Activated CD8-positive, alpha-beta T cell treated with anti-CD3 and anti-CD28 coated beads for 36 hours (primary cell): ENCODE measurements at regions of chr4 and their contacts with region 1.

Region 1: DNA sequence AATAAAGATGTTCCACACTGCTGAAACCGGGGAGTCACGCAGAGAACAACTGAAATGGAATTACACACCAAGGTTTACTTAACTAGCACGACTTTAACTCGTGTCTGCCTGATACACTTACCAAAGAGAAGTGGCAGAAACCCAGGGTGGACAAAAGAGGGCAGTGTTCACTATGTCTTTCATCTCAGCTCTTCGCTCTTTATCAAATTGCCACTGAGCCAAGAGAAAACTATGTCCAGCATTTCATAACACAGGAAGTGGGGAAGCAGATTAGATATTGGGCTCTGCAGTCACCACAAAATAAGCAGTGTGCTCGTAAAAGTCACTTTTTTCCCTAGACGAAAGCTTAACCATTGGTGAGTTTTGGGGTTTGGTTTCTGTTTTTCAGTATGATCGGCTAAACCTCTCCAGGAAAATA is 155.7 kb downstream of the CHIC2 start:
- DNase-seq: peak; percentile 28
- ATAC-seq: peak; percentile 66
- H3K4me3 Mint-ChIP-seq: no peak overlapping the region
- H3K27ac Mint-ChIP-seq: no peak overlapping the region
- H3K4me1 Mint-ChIP-seq: peaks cover 11% of the 10 kb centered on the region
- H3K27me3 Mint-ChIP-seq: peaks cover 44% of the 10 kb centered on the region
- CTCF ChIP-seq: peak; percentile 53

Region 2: DNA sequence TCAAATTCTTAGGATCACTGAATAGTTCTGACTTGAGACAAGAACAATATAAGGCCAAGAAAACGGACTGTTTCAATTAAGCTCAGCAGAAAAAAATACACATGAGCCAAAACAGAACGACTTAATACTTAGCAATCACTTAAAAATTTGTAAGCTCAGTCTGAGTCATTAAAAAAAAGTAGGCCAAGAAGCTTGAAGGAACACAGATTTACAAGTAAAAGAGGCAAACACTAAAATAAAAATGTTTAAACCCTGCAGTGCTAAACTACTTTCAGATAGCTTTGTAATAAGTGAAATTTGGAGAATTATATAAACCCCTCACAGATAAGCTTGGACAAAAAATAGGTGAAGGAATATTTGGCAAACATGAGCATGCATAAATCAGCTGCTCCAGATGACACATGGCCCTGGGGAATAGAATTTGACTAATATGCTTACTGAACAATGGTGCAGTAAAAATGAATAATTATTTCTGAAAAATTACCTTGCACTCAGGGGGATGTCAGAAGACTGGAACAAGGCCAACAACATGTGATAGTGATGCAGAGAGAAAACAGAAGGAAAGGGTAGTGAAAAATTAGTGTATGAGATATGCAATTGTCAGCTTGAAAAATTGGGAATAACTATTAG is 367.0 kb before region 1 on chr4:
- CTCF ChIA-PET with region 1: no interaction called
- POLR2A ChIA-PET with region 1: no interaction called
- intact Hi-C with region 1: no loop called
- DNase-seq: no peak
- ATAC-seq: no peak
- H3K4me3 Mint-ChIP-seq: no peak overlapping the region
- H3K27ac Mint-ChIP-seq: no peak overlapping the region
- H3K4me1 Mint-ChIP-seq: no peaks in the 10 kb centered on the region
- H3K27me3 Mint-ChIP-seq: peaks cover 3% of the 10 kb centered on the region
- CTCF ChIP-seq: no peak

Region 3: DNA sequence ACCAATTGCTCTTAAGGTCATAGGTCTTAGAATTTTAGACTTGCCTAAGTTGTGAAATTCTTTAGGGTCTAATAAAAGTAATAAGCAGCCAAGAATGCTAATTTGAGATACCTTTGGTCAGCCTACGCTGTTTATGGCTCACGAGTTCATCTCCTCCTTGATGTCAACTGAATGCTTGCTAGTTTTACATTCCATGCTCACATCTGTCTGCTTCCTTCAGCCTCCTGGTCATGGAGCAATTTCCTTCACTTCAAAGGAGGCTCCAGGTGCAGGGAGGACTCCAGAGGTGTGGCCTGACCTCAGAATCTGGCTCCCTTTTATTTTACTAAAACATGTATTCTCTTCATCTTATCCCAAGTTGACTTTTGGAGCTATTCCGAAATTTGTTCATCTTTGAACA is 294.1 kb before region 1 on chr4:
- CTCF ChIA-PET with region 1: no interaction called
- POLR2A ChIA-PET with region 1: no interaction called
- intact Hi-C with region 1: no loop called
- DNase-seq: no peak
- ATAC-seq: no peak
- H3K4me3 Mint-ChIP-seq: no peak overlapping the region
- H3K27ac Mint-ChIP-seq: no peak overlapping the region
- H3K4me1 Mint-ChIP-seq: peaks cover 6% of the 10 kb centered on the region
- H3K27me3 Mint-ChIP-seq: peaks cover 12% of the 10 kb centered on the region
- CTCF ChIP-seq: no peak

Region 4: GRCh38 chr4:53790286-53790685 is 118.4 kb before region 1 on chr4:
- CTCF ChIA-PET with region 1: no interaction called
- POLR2A ChIA-PET with region 1: no interaction called
- intact Hi-C with region 1: no loop called
- DNase-seq: no peak
- ATAC-seq: no peak
- H3K4me3 Mint-ChIP-seq: no peak overlapping the region
- H3K27ac Mint-ChIP-seq: no peak overlapping the region
- H3K4me1 Mint-ChIP-seq: no peaks in the 10 kb centered on the region
- H3K27me3 Mint-ChIP-seq: peaks cover 13% of the 10 kb centered on the region
- CTCF ChIP-seq: no peak

Region 5: DNA sequence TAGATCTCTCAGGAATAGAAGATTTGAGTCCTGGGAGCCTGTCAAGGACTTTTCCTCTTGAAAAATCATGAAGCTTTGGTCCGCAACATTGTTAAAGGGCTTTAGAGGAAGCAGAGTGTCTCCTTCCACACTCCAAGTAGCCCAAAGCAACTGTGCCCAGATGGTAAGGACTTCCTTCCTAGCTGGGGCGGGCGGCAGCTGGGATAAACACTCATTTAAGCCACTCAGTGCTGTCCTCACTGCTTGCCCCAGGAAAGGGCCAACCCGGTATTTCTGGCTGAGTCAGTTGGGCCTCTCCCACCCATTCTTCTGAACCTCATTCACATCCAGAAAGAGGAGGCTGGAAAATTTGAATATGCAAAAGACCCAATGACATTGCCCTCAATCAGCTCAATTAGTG is 11.4 kb after region 1 on chr4:
- CTCF ChIA-PET with region 1: interaction called, 19 read pairs
- POLR2A ChIA-PET with region 1: no interaction called
- intact Hi-C with region 1: no loop called
- DNase-seq: no peak
- ATAC-seq: no peak
- H3K4me3 Mint-ChIP-seq: no peak overlapping the region
- H3K27ac Mint-ChIP-seq: no peak overlapping the region
- H3K4me1 Mint-ChIP-seq: no peaks in the 10 kb centered on the region
- H3K27me3 Mint-ChIP-seq: peaks cover 4% of the 10 kb centered on the region
- CTCF ChIP-seq: no peak

Region 6: GRCh38 chr4:54217642-54218495 is 309.2 kb after region 1 on chr4:
- CTCF ChIA-PET with region 1: interaction called, 26 read pairs
- POLR2A ChIA-PET with region 1: no interaction called
- intact Hi-C with region 1: no loop called
- DNase-seq: peak; percentile 67
- ATAC-seq: peak; percentile 83
- H3K4me3 Mint-ChIP-seq: peak overlapping the region; percentile 42
- H3K27ac Mint-ChIP-seq: no peak overlapping the region
- H3K4me1 Mint-ChIP-seq: peaks cover 3% of the 10 kb centered on the region
- H3K27me3 Mint-ChIP-seq: peaks cover 28% of the 10 kb centered on the region
- CTCF ChIP-seq: peak; percentile 89

Region 7: GRCh38 chr4:54228056-54228527 is 319.4 kb after region 1 on chr4:
- CTCF ChIA-PET with region 1: interaction called, 114 read pairs
- POLR2A ChIA-PET with region 1: no interaction called
- intact Hi-C with region 1: loop called (anchors 5 kb)
- DNase-seq: peak; percentile 74
- ATAC-seq: peak; percentile 71
- H3K4me3 Mint-ChIP-seq: no peak overlapping the region
- H3K27ac Mint-ChIP-seq: no peak overlapping the region
- H3K4me1 Mint-ChIP-seq: peaks cover 35% of the 10 kb centered on the region
- H3K27me3 Mint-ChIP-seq: peaks cover 87% of the 10 kb centered on the region
- CTCF ChIP-seq: peak; percentile 84